Endothelial cell of umbilical vein (primary cell): ENCODE measurements at regions of chr2 and their contacts with region 1.

Region 1: DNA sequence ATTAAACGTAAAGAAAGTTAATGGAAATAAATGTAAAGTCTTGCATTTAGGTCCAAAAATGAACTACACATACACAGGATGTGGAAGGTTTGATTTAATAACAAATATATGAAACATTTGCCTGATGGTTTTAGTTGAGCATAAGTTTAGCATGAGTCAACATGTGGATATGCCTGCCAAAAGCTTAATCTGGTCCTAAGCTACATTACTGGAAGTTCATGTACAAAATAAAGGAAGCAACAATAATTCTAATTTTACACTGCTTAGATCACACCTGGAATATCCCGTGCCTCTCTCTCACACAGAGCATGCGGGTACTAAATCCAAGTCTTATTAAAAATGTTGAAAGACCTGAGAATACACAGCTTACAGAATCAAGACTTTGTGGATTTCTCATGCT is 276.5 kb upstream of the NRP2 start:
- DNase-seq: peak; percentile 87
- H3K4me3 ChIP-seq: no peak overlapping the region
- H3K27ac ChIP-seq: peak overlapping the region; percentile 54
- H3K4me1 ChIP-seq: peaks cover 26% of the 10 kb centered on the region
- H3K27me3 ChIP-seq: no peaks in the 10 kb centered on the region
- CTCF ChIP-seq: no peak
- POLR2A ChIP-seq: no peak

Region 2: GRCh38 chr2:205372141-205372540 is 33.6 kb before region 1 on chr2:
- CTCF ChIA-PET with region 1: no interaction called
- POLR2A ChIA-PET with region 1: no interaction called
- dilution Hi-C with region 1: no loop called
- intact Hi-C with region 1: no loop called
- DNase-seq: no peak
- H3K4me3 ChIP-seq: no peak overlapping the region
- H3K27ac ChIP-seq: no peak overlapping the region
- H3K4me1 ChIP-seq: peaks cover 2% of the 10 kb centered on the region
- H3K27me3 ChIP-seq: no peaks in the 10 kb centered on the region
- CTCF ChIP-seq: no peak
- POLR2A ChIP-seq: no peak

Region 3: GRCh38 chr2:205390866-205391265 is 14.9 kb before region 1 on chr2:
- CTCF ChIA-PET with region 1: interaction called, 14 read pairs
- POLR2A ChIA-PET with region 1: interaction called, 6 read pairs
- dilution Hi-C with region 1: no loop called
- intact Hi-C with region 1: no loop called
- DNase-seq: peak; percentile 24
- H3K4me3 ChIP-seq: no peak overlapping the region
- H3K27ac ChIP-seq: no peak overlapping the region
- H3K4me1 ChIP-seq: peaks cover 5% of the 10 kb centered on the region
- H3K27me3 ChIP-seq: no peaks in the 10 kb centered on the region
- CTCF ChIP-seq: no peak
- POLR2A ChIP-seq: no peak

Region 4: GRCh38 chr2:205435970-205436369 is 30.2 kb after region 1 on chr2:
- CTCF ChIA-PET with region 1: interaction called, 4 read pairs
- POLR2A ChIA-PET with region 1: no interaction called
- dilution Hi-C with region 1: no loop called
- intact Hi-C with region 1: loop called (anchors 1 kb)
- DNase-seq: peak; percentile 84
- H3K4me3 ChIP-seq: no peak overlapping the region
- H3K27ac ChIP-seq: peak overlapping the region; percentile 65
- H3K4me1 ChIP-seq: peaks cover 9% of the 10 kb centered on the region
- H3K27me3 ChIP-seq: no peaks in the 10 kb centered on the region
- CTCF ChIP-seq: peak in 1 of 2 donors; percentile 1
- POLR2A ChIP-seq: no peak

Region 5: DNA sequence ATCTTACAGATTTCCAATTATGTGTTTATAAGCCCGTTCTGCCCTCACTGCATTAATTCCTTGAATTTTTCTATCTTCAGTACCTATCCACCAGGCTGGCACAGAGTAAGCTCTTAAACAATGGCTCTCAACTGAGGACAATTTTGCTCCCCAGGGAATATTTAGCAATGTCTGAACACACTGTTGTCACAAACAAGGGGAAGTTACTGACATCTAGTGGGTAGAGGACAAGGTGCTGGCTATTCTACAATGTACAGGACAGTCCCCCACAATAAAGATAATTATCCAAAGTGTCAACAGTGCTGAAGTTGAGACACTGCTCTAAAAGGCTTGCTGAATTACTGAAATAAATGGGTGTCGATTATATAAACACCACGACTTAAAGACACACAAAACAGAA is 748.4 kb after region 1 on chr2:
- CTCF ChIA-PET with region 1: no interaction called
- POLR2A ChIA-PET with region 1: interaction called, 13 read pairs
- dilution Hi-C with region 1: no loop called
- intact Hi-C with region 1: no loop called
- DNase-seq: no peak
- H3K4me3 ChIP-seq: no peak overlapping the region
- H3K27ac ChIP-seq: no peak overlapping the region
- H3K4me1 ChIP-seq: peaks cover 10% of the 10 kb centered on the region
- H3K27me3 ChIP-seq: no peaks in the 10 kb centered on the region
- CTCF ChIP-seq: no peak
- POLR2A ChIP-seq: no peak